Natural killer cell (primary cell): ENCODE measurements at regions of chr5 and their contacts with region 1.

Region 1: GRCh38 chr5:95846554-95847260 is 24.2 kb upstream of the GLRX start:
- DNase-seq: peak; percentile 60 to 87
- ATAC-seq: peak; percentile 85 to 87 (median 87)
- H3K4me3 ChIP-seq: no peak overlapping the region
- H3K4me3 Mint-ChIP-seq: no peak overlapping the region
- H3K27ac ChIP-seq: no peak overlapping the region
- H3K27ac Mint-ChIP-seq: no peak overlapping the region
- H3K4me1 ChIP-seq: peaks cover 12% of the 10 kb centered on the region
- H3K4me1 Mint-ChIP-seq: peaks cover 16 to 19% of the 10 kb centered on the region in 2 donors
- H3K27me3 ChIP-seq: no peaks in the 10 kb centered on the region
- H3K27me3 Mint-ChIP-seq: peaks cover 0 to 2% of the 10 kb centered on the region in 2 donors
- CTCF ChIP-seq: peak; percentile 92

Region 2: GRCh38 chr5:95554647-95555548 is 291.8 kb before region 1 on chr5 and contains the starts of genes ARSK and SKIC3:
- intact Hi-C with region 1: loop called (anchors 5 kb)
- DNase-seq: peak; percentile 81 to 99
- ATAC-seq: peak; percentile 85 to 96 (median 88)
- H3K4me3 ChIP-seq: peak within 1 kb of the TSS; percentile 97
- H3K4me3 Mint-ChIP-seq: peak within 1 kb of the TSS; percentile 98
- H3K27ac ChIP-seq: peak within 1 kb of the TSS; percentile 78
- H3K27ac Mint-ChIP-seq: peak within 1 kb of the TSS; percentile 92 to 94
- H3K4me1 ChIP-seq: peaks cover 13% of the 10 kb centered on the region
- H3K4me1 Mint-ChIP-seq: peaks cover 35 to 44% of the 10 kb centered on the region in 2 donors
- H3K27me3 ChIP-seq: no peaks in the 10 kb centered on the region
- H3K27me3 Mint-ChIP-seq: no peaks in the 10 kb centered on the region
- CTCF ChIP-seq: no peak
- total RNA-seq, gene ARSK: 2.8 to 5.8 (median 3.5) TPM
- total RNA-seq, gene SKIC3: 67.5 to 94.1 (median 71.1) TPM

Region 3: DNA sequence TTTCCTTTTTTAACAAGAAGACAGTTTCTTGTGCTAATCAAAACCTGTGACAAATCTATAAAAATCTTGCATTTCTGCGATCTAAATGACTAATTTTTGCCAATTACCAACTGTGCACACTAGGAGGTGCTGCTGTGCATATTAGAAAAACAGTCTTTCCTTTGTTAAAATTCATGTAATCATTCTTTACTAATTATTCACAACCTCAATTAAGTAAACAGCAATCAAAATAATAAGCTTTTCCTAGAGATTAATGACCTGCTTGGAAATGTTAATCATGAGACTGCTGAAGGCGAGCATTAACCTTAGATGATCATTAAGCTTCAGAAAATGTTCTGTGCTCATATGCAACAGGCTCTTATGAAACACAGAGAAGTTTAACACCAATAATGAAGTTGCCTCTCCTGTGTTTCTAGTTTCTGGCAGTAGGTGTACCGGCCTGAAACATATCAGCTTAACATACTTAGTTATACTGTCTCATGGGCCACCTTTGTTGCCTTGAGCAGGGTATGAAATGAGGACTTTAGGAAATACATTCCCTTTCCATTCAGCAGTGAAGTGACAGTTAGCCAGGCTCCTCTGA is 182.4 kb before region 1 on chr5:
- intact Hi-C with region 1: loop called (anchors 1 kb)
- DNase-seq: peak in 1 of 2 donors; percentile 66
- ATAC-seq: peak; percentile 59 to 64 (median 61)
- H3K4me3 ChIP-seq: no peak overlapping the region
- H3K4me3 Mint-ChIP-seq: no peak overlapping the region
- H3K27ac ChIP-seq: no peak overlapping the region
- H3K27ac Mint-ChIP-seq: no peak overlapping the region
- H3K4me1 ChIP-seq: no peaks in the 10 kb centered on the region
- H3K4me1 Mint-ChIP-seq: no peaks in the 10 kb centered on the region
- H3K27me3 ChIP-seq: no peaks in the 10 kb centered on the region
- H3K27me3 Mint-ChIP-seq: no peaks in the 10 kb centered on the region
- CTCF ChIP-seq: peak; percentile 91

Region 4: GRCh38 chr5:95781101-95781583 is 65.6 kb before region 1 on chr5:
- intact Hi-C with region 1: loop called (anchors 1 kb)
- DNase-seq: peak; percentile 54 to 88
- ATAC-seq: peak; percentile 88 to 94 (median 94)
- H3K4me3 ChIP-seq: no peak overlapping the region
- H3K4me3 Mint-ChIP-seq: peak overlapping the region; percentile 51
- H3K27ac ChIP-seq: no peak overlapping the region
- H3K27ac Mint-ChIP-seq: peak overlapping the region; percentile 76 to 79
- H3K4me1 ChIP-seq: peaks cover 13% of the 10 kb centered on the region
- H3K4me1 Mint-ChIP-seq: peaks cover 23 to 24% of the 10 kb centered on the region in 2 donors
- H3K27me3 ChIP-seq: no peaks in the 10 kb centered on the region
- H3K27me3 Mint-ChIP-seq: no peaks in the 10 kb centered on the region
- CTCF ChIP-seq: peak; percentile 94

Region 5: GRCh38 chr5:95808686-95809413 is 37.9 kb before region 1 on chr5:
- intact Hi-C with region 1: loop called (anchors 2 kb)
- DNase-seq: peak; percentile 60 to 94
- ATAC-seq: peak; percentile 99 to 100 (median 100)
- H3K4me3 ChIP-seq: no peak overlapping the region
- H3K4me3 Mint-ChIP-seq: peak overlapping the region; percentile 77
- H3K27ac ChIP-seq: peak overlapping the region; percentile 77
- H3K27ac Mint-ChIP-seq: peak overlapping the region; percentile 81 to 94
- H3K4me1 ChIP-seq: peaks cover 44% of the 10 kb centered on the region
- H3K4me1 Mint-ChIP-seq: peaks cover 56 to 58% of the 10 kb centered on the region in 2 donors
- H3K27me3 ChIP-seq: no peaks in the 10 kb centered on the region
- H3K27me3 Mint-ChIP-seq: no peaks in the 10 kb centered on the region
- CTCF ChIP-seq: no peak

Region 6: GRCh38 chr5:95826949-95827891 is 19.5 kb before region 1 on chr5:
- intact Hi-C with region 1: no loop called
- DNase-seq: no peak
- ATAC-seq: no peak
- H3K4me3 ChIP-seq: no peak overlapping the region
- H3K4me3 Mint-ChIP-seq: no peak overlapping the region
- H3K27ac ChIP-seq: no peak overlapping the region
- H3K27ac Mint-ChIP-seq: peak overlapping the region; percentile 4 to 6
- H3K4me1 ChIP-seq: peaks cover 28% of the 10 kb centered on the region
- H3K4me1 Mint-ChIP-seq: peaks cover 41 to 42% of the 10 kb centered on the region in 2 donors
- H3K27me3 ChIP-seq: no peaks in the 10 kb centered on the region
- H3K27me3 Mint-ChIP-seq: no peaks in the 10 kb centered on the region
- CTCF ChIP-seq: no peak

Region 7: GRCh38 chr5:95861221-95861857 is 14.6 kb after region 1 on chr5:
- intact Hi-C with region 1: no loop called
- DNase-seq: no peak
- ATAC-seq: no peak
- H3K4me3 ChIP-seq: no peak overlapping the region
- H3K4me3 Mint-ChIP-seq: no peak overlapping the region
- H3K27ac ChIP-seq: no peak overlapping the region
- H3K27ac Mint-ChIP-seq: no peak overlapping the region
- H3K4me1 ChIP-seq: peaks cover 19% of the 10 kb centered on the region
- H3K4me1 Mint-ChIP-seq: peaks cover 7 to 17% of the 10 kb centered on the region in 2 donors
- H3K27me3 ChIP-seq: peaks cover 2% of the 10 kb centered on the region
- H3K27me3 Mint-ChIP-seq: peaks cover 35 to 54% of the 10 kb centered on the region in 2 donors
- CTCF ChIP-seq: no peak